ENCODE measurements at regions of chr14 and their contacts with region 1.

Region 1: DNA sequence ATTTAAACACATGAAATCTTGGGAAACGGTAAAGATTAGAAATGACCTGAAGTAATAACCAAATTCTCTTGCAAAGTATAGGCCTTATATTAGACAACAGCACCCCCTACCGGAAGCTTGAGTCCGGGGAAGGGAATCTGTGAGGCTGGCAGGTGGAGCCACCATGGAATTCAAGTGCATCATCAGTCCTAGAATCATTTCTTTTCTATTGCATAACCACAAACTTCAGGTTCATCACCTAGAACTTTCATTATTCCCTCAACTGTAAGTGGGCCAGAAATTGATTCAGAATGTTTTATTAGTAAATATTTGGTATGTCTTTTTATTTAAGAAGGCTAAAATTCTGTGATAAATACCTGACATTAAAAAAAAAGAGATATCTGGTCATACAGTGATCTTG is 48.5 kb downstream of the AP5M1 start:
- DNase-seq: peak; percentile 42
- ATAC-seq: peak; percentile 52

Region 2: DNA sequence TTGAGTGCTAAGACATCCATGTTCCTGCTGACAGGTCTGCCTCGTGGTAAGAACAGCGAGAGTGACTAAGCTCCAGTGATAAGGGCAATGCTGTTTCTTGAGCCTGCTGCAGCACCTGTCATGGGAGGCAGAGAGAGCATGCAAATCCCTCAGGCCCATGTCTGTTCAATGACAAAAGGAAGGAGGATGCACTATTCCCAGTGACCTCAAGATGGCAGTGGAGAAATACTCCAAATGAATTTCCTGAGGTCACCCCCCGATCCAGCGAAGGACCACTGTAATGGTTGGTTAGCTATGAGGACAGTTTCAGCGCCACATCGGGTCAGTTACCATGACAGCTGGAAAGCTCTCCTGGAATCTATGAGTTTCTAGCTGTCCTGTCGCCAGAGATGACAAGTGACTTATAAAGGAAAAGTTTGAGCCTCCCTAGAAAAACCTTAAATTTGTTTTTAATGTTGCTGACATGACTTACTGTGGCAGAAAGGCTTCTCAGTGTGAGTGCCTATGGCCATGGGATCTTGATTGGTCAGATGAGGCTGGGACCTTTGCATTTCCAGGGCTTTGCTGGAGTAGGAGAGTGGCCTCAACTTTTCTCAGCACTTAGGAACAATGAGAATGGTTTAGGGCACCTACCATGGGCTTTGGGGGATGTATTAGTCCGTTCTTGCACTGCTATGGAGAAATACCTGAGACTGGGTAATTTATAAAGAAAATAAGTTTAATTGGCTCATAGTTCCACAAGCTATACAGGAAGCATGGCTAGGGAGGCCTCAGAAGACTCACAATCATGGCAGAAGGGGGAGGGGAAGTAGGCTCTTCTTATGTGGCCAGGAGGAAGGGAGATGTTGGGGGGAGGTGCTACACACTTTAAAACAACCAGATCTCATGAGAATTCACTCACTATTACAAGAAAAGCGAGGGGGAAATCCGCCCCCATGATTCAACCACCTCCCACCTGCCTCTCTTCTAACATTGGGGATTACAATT is 825.7 kb before region 1 on chr14:
- intact Hi-C with region 1: loop called (anchors 5 kb)
- DNase-seq: no peak
- ATAC-seq: peak; percentile 54

Region 3: GRCh38 chr14:56979936-56980335 is 337.4 kb before region 1 on chr14:
- intact Hi-C with region 1: no loop called
- DNase-seq: no peak
- ATAC-seq: no peak

Region 4: GRCh38 chr14:57199921-57200320 is 117.4 kb before region 1 on chr14:
- intact Hi-C with region 1: no loop called
- DNase-seq: no peak
- ATAC-seq: no peak

Region 5: GRCh38 chr14:57244106-57244505 is 73.2 kb before region 1 on chr14:
- intact Hi-C with region 1: no loop called
- DNase-seq: no peak
- ATAC-seq: no peak

Measured in left ventricle myocardium superior (tissue), 1 donor.